ENCODE measurements at regions of chr12 and their contacts with region 1.

Region 1: GRCh38 chr12:119544765-119545625 is 48.6 kb upstream of the TMEM233 start:
- DNase-seq: peak; percentile 25
- H3K4me3 ChIP-seq: no peak overlapping the region
- H3K27ac ChIP-seq: no peak overlapping the region
- H3K4me1 ChIP-seq: no peaks in the 10 kb centered on the region
- H3K27me3 ChIP-seq: peaks cover 23% of the 10 kb centered on the region
- CTCF ChIP-seq: peak; percentile 93

Region 2: DNA sequence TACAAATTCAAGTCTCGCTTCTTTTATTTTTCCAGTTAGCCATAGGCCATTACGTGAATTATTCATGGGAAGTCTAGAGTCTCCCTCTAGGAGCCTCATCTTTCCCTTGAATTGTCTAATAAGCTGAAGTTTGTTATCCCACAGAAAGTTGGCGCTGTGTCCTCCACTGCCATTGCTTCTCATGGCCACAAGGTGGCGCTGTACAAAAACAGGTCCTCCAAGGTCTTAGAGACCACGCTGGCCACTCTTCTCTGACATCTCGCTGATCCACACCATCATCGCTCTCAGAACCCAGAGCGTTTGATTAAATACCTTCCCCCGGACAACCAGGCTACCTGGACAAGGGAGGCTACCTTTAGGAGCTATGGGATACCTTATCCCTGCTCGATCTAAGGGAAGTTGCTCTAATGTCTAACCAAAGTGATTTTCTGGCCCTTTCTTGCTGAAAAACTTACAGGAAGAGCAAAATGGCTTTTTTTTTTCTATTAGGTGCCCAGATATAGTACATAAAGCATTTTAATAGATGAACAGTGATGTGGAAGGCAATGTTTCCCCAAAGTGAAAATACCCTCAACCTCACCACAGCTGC is 100.4 kb before region 1 on chr12:
- intact Hi-C with region 1: loop called (anchors 10 kb)
- DNase-seq: peak; percentile 18
- H3K4me3 ChIP-seq: no peak overlapping the region
- H3K27ac ChIP-seq: no peak overlapping the region
- H3K4me1 ChIP-seq: no peaks in the 10 kb centered on the region
- H3K27me3 ChIP-seq: peaks cover 50% of the 10 kb centered on the region
- CTCF ChIP-seq: peak; percentile 84